H1 (cell line): ENCODE measurements at regions of chr10 and their contacts with region 1.

Region 1: GRCh38 chr10:132634241-132634946 is 96.8 kb downstream of the INPP5A start:
- DNase-seq: no peak
- H3K4me3 ChIP-seq: no peak overlapping the region
- H3K27ac ChIP-seq: no peak overlapping the region
- H3K4me1 ChIP-seq: peaks cover 0 to 2% (median 0%) of the 10 kb centered on the region in 4 experiments; a peak in 2 of 7 replicates
- H3K27me3 ChIP-seq: no peaks in the 10 kb centered on the region
- CTCF ChIP-seq: peak; percentile 48 to 71 (median 55)
- EP300 ChIP-seq: no peak
- POLR2A ChIP-seq: no peak
- RAD21 ChIP-seq: peak; percentile 34 to 40

Region 2: DNA sequence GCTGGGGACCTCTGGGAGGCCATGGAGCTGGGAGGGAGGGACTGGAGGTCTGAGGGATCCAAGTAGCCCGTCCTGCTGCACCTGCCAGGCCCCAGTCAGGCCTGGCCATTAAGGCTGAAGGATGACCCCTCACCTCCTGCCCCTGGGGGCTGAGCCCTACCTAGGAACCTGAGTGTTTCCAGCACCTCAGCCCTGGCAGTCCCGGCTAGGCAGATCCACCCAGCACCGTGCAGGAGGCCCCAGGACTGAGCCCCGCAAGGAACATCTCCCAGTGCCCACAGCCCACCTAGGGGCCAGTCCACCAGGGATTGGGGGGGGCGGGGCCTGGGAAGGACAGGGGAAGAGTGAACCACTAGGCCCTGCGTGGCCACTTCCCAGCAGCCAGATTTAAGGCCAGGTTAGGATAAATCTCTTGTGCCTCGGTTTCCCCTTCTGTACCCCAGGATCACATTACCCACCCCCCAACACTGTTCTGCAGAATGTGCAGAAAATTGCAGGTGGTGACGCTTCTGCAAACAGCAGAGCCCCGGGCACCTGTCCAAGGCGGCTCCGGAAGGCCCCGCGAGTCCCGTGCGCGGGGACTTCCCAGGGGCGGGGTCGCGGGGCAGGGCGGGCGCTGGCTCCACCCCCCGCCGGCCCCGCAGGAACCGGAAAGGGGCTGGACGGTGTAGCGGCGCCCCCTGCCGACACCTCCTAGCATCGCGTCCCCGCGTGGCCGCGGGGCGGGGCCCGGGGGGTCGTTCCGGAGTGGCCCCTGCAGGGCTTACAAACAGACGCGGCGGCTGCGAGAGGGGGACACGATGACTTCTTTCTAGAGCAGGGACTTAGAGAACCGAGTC is 181.5 kb before region 1 on chr10:
- CTCF ChIA-PET with region 1: interaction called, 19 read pairs
- POLR2A ChIA-PET with region 1: no interaction called
- DNase-seq: peak in 1 of 2 experiments; percentile 98
- H3K4me3 ChIP-seq: peak overlapping the region in 1 of 4 experiments; percentile 42; a peak in 3 of 8 replicates
- H3K27ac ChIP-seq: no peak overlapping the region
- H3K4me1 ChIP-seq: peaks cover 0 to 16% (median 12%) of the 10 kb centered on the region in 4 experiments; a peak in 6 of 7 replicates
- H3K27me3 ChIP-seq: peaks cover 0 to 2% (median 0%) of the 10 kb centered on the region in 4 experiments; a peak in 2 of 7 replicates
- CTCF ChIP-seq: peak in 2 of 3 experiments; percentile 72 to 96; a peak in 3 of 4 replicates
- EP300 ChIP-seq: 0 out of 3 replicates have a peak, but pooled peaks of 1 of the 2 experiments have one; percentile 40
- POLR2A ChIP-seq: no peak
- RAD21 ChIP-seq: peak; percentile 93 to 98

Region 3: GRCh38 chr10:132458593-132459300 is 175.6 kb before region 1 on chr10:
- CTCF ChIA-PET with region 1: interaction called, 88 read pairs
- POLR2A ChIA-PET with region 1: no interaction called
- DNase-seq: peak in 1 of 2 experiments; percentile 96
- H3K4me3 ChIP-seq: no peak overlapping the region
- H3K27ac ChIP-seq: no peak overlapping the region
- H3K4me1 ChIP-seq: no peaks in the 10 kb centered on the region
- H3K27me3 ChIP-seq: peaks cover 0 to 4% (median 0%) of the 10 kb centered on the region in 4 experiments; a peak in 2 of 7 replicates
- CTCF ChIP-seq: peak in 2 of 3 experiments; percentile 86 to 92; a peak in 3 of 4 replicates
- EP300 ChIP-seq: no peak
- POLR2A ChIP-seq: no peak
- RAD21 ChIP-seq: peak; percentile 91 to 92

Region 4: GRCh38 chr10:132575356-132576201 is 58.8 kb before region 1 on chr10:
- CTCF ChIA-PET with region 1: interaction called, 15 read pairs
- POLR2A ChIA-PET with region 1: no interaction called
- DNase-seq: no peak
- H3K4me3 ChIP-seq: no peak overlapping the region
- H3K27ac ChIP-seq: no peak overlapping the region
- H3K4me1 ChIP-seq: peaks cover 7 to 34% (median 22%) of the 10 kb centered on the region in 4 experiments
- H3K27me3 ChIP-seq: no peaks in the 10 kb centered on the region; a peak in 1 of 7 replicates
- CTCF ChIP-seq: no peak
- EP300 ChIP-seq: no peak
- POLR2A ChIP-seq: no peak
- RAD21 ChIP-seq: no peak

Region 5: GRCh38 chr10:132618158-132618919 is 16.1 kb before region 1 on chr10:
- CTCF ChIA-PET with region 1: interaction called, 13 read pairs
- POLR2A ChIA-PET with region 1: no interaction called
- DNase-seq: no peak
- H3K4me3 ChIP-seq: no peak overlapping the region
- H3K27ac ChIP-seq: no peak overlapping the region
- H3K4me1 ChIP-seq: no peaks in the 10 kb centered on the region; a peak in 2 of 7 replicates
- H3K27me3 ChIP-seq: peaks cover 0 to 7% (median under 1%) of the 10 kb centered on the region in 4 experiments; a peak in 2 of 7 replicates
- CTCF ChIP-seq: no peak
- EP300 ChIP-seq: no peak
- POLR2A ChIP-seq: no peak
- RAD21 ChIP-seq: no peak